Activated naive CD4-positive, alpha-beta T cell treated with anti-CD3 and anti-CD28 coated beads for 36 hours (primary cell): ENCODE measurements at regions of chr2 and their contacts with region 1.

Region 1: GRCh38 chr2:70919672-70920366 is 15.9 kb upstream of the ATP6V1B1 start:
- DNase-seq: peak; percentile 85
- H3K4me3 Mint-ChIP-seq: no peak overlapping the region
- H3K27ac Mint-ChIP-seq: no peak overlapping the region
- H3K4me1 Mint-ChIP-seq: no peaks in the 10 kb centered on the region
- H3K27me3 Mint-ChIP-seq: peaks cover 22% of the 10 kb centered on the region

Region 2: GRCh38 chr2:70861777-70862625 is 57.8 kb before region 1 on chr2:
- CTCF ChIA-PET with region 1: interaction called, 19 read pairs
- intact Hi-C with region 1: loop called (anchors 2 kb)
- DNase-seq: peak; percentile 87
- H3K4me3 Mint-ChIP-seq: no peak overlapping the region
- H3K27ac Mint-ChIP-seq: no peak overlapping the region
- H3K4me1 Mint-ChIP-seq: peaks cover 2% of the 10 kb centered on the region
- H3K27me3 Mint-ChIP-seq: peaks cover 12% of the 10 kb centered on the region

Region 3: DNA sequence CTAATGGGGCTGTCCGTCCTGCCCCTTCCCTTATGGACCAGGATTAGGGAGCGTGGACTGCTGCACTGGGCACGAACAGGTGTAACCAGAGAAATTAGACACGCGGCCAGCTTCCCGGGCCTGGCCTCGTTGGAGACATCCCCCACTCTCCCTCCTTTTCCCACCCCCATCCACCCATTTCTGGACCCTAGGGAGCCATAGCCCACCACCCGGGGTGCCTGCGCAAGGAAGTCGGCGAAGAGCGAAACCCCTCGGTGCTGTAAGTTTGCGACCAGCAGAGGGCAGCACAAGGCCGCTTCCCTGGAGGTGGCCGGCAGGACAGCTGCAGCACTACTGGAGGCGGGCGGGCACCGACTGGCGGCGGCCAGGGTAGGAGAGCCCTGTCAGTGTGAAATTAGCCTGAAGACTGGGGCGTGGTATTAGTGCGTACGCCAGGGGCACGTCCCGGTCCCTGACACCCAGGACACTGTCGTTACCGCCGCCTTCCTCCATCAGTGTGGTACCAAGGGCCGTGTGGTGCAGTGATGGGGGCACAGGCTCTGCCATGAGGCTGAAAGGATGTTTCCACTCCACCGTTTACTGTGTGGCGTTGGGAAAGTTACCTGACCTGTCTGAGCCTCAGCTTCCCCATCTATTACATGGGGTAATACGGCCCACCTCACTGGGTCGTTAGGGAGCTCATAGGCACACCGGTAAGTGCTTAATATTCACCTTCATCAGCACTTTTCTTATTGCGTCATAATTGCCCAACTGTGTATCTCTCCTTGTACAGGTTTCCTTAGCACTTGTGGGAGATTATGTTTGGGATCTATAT is 48.2 kb before region 1 on chr2:
- CTCF ChIA-PET with region 1: interaction called, 143 read pairs
- intact Hi-C with region 1: loop called (anchors 1 kb)
- DNase-seq: peak; percentile 90
- H3K4me3 Mint-ChIP-seq: no peak overlapping the region
- H3K27ac Mint-ChIP-seq: no peak overlapping the region
- H3K4me1 Mint-ChIP-seq: peaks cover 5% of the 10 kb centered on the region
- H3K27me3 Mint-ChIP-seq: peaks cover 32% of the 10 kb centered on the region

Region 4: GRCh38 chr2:70994756-70995729 is 75.2 kb after region 1 on chr2 and contains the start of gene TEX261:
- CTCF ChIA-PET with region 1: no interaction called
- intact Hi-C with region 1: no loop called
- DNase-seq: peak; percentile 91
- H3K4me3 Mint-ChIP-seq: peak within 1 kb of the TSS; percentile 94
- H3K27ac Mint-ChIP-seq: peak within 1 kb of the TSS; percentile 89
- H3K4me1 Mint-ChIP-seq: peaks cover 33% of the 10 kb centered on the region
- H3K27me3 Mint-ChIP-seq: no peaks in the 10 kb centered on the region
- total RNA-seq, gene TEX261: 17.8 to 18.7 TPM